ENCODE measurements at regions of chr20 and their contacts with region 1.

Region 1: GRCh38 chr20:21505161-21505809 is 8.6 kb downstream of the NKX2-2 start:
- DNase-seq: peak; percentile 94
- ATAC-seq: peak; percentile 47
- H3K4me3 Mint-ChIP-seq: peak overlapping the region; percentile 56
- H3K27ac Mint-ChIP-seq: no peak overlapping the region
- H3K4me1 Mint-ChIP-seq: peaks cover 37% of the 10 kb centered on the region
- H3K27me3 Mint-ChIP-seq: peaks cover 73% of the 10 kb centered on the region
- CTCF ChIP-seq: peak; percentile 99

Region 2: GRCh38 chr20:20843982-20844381 is 661.3 kb before region 1 on chr20:
- CTCF ChIA-PET with region 1: interaction called, 44 read pairs
- POLR2A ChIA-PET with region 1: no interaction called
- DNase-seq: peak; percentile 58
- ATAC-seq: peak; percentile 98
- H3K4me3 Mint-ChIP-seq: no peak overlapping the region
- H3K27ac Mint-ChIP-seq: no peak overlapping the region
- H3K4me1 Mint-ChIP-seq: no peaks in the 10 kb centered on the region
- H3K27me3 Mint-ChIP-seq: no peaks in the 10 kb centered on the region; the same call in none of the 2 replicates
- CTCF ChIP-seq: no peak

Region 3: DNA sequence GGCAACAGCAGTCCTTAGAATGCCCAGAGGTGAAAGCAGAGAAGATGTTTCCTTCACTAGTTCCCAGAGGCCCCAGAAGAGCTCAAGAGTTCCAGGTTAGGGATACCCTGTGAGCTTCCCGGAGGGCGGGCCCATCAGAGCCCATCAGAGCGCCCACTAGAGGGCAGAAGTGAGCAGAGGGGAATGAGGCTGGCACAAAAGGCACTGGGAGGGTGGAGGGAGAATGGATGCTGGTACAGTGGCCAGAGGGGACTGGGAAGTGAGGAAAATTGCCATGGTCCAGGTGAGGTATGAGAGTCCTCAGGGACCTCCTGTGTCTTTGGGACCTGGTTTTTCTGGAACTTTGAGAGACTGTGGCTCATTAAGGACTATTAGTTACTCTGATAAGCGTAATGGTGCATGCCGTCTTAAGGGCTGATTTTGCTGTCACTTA is 456.4 kb before region 1 on chr20:
- CTCF ChIA-PET with region 1: interaction called, 24 read pairs
- POLR2A ChIA-PET with region 1: no interaction called
- DNase-seq: peak; percentile 88
- ATAC-seq: peak; percentile 88
- H3K4me3 Mint-ChIP-seq: no peak overlapping the region
- H3K27ac Mint-ChIP-seq: no peak overlapping the region
- H3K4me1 Mint-ChIP-seq: peaks cover 18% of the 10 kb centered on the region
- H3K27me3 Mint-ChIP-seq: no peaks in the 10 kb centered on the region
- CTCF ChIP-seq: peak; percentile 85

Region 4: GRCh38 chr20:21395666-21396598 is 109.4 kb before region 1 on chr20:
- CTCF ChIA-PET with region 1: interaction called, 19 read pairs
- POLR2A ChIA-PET with region 1: no interaction called
- DNase-seq: peak; percentile 37
- ATAC-seq: peak; percentile 17
- H3K4me3 Mint-ChIP-seq: peak overlapping the region; percentile 60
- H3K27ac Mint-ChIP-seq: no peak overlapping the region
- H3K4me1 Mint-ChIP-seq: peaks cover 31% of the 10 kb centered on the region
- H3K27me3 Mint-ChIP-seq: peaks cover 93% of the 10 kb centered on the region
- CTCF ChIP-seq: no peak

Region 5: GRCh38 chr20:21520702-21521595 is 15.7 kb after region 1 on chr20:
- CTCF ChIA-PET with region 1: interaction called, 88 read pairs
- POLR2A ChIA-PET with region 1: interaction called, 3 read pairs
- DNase-seq: peak; percentile 70
- ATAC-seq: peak; percentile 43
- H3K4me3 Mint-ChIP-seq: peak overlapping the region; percentile 69
- H3K27ac Mint-ChIP-seq: no peak overlapping the region
- H3K4me1 Mint-ChIP-seq: peaks cover 71% of the 10 kb centered on the region
- H3K27me3 Mint-ChIP-seq: peaks cover 96% of the 10 kb centered on the region
- CTCF ChIP-seq: no peak

Region 6: GRCh38 chr20:21615617-21616080 is 110.4 kb after region 1 on chr20:
- CTCF ChIA-PET with region 1: interaction called, 14 read pairs
- POLR2A ChIA-PET with region 1: no interaction called
- DNase-seq: peak; percentile 81
- ATAC-seq: peak; percentile 96
- H3K4me3 Mint-ChIP-seq: no peak overlapping the region
- H3K27ac Mint-ChIP-seq: no peak overlapping the region
- H3K4me1 Mint-ChIP-seq: peaks cover 4% of the 10 kb centered on the region
- H3K27me3 Mint-ChIP-seq: peaks cover 22% of the 10 kb centered on the region
- CTCF ChIP-seq: peak; percentile 41

Region 7: DNA sequence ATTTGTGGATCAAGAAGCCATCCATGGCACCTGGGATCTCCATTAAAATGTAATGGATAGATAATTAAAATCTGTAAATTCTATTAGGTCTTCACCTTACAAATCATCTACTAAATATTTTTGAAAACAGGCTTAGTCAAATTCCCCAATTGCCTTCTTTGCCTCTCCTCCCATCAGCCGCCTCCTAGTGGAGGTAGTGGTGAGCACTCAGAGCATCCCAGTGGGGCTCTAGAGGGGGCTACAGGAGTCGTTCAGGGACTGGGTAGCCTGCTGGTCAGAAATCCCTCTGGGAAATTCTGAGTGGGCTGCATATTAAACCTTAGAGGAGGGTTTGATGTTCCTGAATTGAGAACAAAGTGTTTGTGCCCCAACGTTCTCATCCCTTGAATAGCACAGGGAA is 179.4 kb after region 1 on chr20:
- CTCF ChIA-PET with region 1: no interaction called
- POLR2A ChIA-PET with region 1: no interaction called
- DNase-seq: peak; percentile 38
- ATAC-seq: peak; percentile 88
- H3K4me3 Mint-ChIP-seq: no peak overlapping the region
- H3K27ac Mint-ChIP-seq: no peak overlapping the region
- H3K4me1 Mint-ChIP-seq: no peaks in the 10 kb centered on the region
- H3K27me3 Mint-ChIP-seq: no peaks in the 10 kb centered on the region
- CTCF ChIP-seq: no peak; the same call in 1 of the 2 replicates